Naive thymus-derived CD4-positive, alpha-beta T cell (primary cell): ENCODE measurements at regions of chr6 and their contacts with region 1.

Region 1: DNA sequence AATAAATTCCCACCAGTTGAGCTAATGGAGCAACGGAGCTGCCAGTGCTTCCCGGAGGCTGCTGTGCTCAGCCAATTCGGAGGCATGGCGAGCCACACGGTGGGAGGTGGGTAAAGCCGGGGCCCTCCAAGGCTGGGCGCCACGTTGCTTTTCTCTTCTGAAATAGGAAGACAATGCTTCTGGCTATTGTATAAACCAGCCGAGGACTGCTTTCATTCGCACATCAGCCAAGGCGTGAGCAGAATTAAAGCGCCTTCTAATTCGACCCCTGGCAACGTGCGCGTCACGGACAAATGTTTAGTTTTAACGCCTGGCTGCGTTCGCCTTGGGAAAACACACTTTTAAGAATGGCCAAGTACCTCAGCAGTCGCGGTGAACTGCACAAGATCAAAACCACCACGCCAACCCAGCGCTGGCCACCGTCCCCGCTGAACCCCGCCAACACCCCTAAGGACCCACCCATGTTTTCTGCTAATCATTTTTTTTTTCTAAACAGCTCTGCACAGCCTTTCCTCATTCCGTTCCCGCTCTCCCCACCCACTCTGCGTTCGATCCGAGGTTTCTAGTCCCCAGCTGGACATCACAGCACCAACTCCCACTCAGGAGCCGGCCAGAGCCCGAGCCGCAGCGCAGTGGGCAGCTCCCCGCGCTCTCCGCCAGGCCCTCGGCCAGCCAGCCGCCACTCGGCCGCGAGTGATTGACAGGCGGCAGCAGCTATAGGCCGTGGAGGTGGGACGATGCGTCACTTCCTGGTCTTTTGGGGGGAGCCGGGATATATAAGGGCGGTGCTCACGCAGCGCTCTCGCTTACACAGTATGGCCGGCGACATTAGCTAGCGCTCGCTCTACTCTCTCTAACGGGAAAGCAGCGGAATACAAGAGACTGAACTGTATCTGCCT is at the start of gene AMD1:
- DNase-seq: peak; percentile 87 to 97 (median 96)
- ATAC-seq: peak; percentile 85
- H3K4me3 ChIP-seq: peak within 1 kb of the TSS; percentile 99
- H3K4me3 Mint-ChIP-seq: peak within 1 kb of the TSS in 9 of 10 donors; percentile 94 to 99 (median 99)
- H3K27ac ChIP-seq: peak within 1 kb of the TSS; percentile 73
- H3K27ac Mint-ChIP-seq: peak within 1 kb of the TSS in 8 of 9 donors; percentile 96 to 100 (median 99)
- H3K4me1 ChIP-seq: peaks cover 26 to 28% of the 10 kb centered on the region in 2 donors
- H3K4me1 Mint-ChIP-seq: peaks cover 19 to 28% (median 27%) of the 10 kb centered on the region in 7 donors
- H3K27me3 ChIP-seq: no peaks in the 10 kb centered on the region
- H3K27me3 Mint-ChIP-seq: no peaks in the 10 kb centered on the region
- total RNA-seq, gene AMD1: 61.1 to 105 (median 73.8) TPM

Region 2: GRCh38 chr6:109455502-109456282 is 1418.5 kb before region 1 on chr6 and contains the start of gene MICAL1:
- CTCF ChIA-PET with region 1: no interaction called
- POLR2A ChIA-PET with region 1: no interaction called
- intact Hi-C with region 1: loop called in 1 of 2 experiments (anchors 1 kb)
- DNase-seq: peak; percentile 55 to 79 (median 72)
- ATAC-seq: peak; percentile 82
- H3K4me3 ChIP-seq: peak within 1 kb of the TSS; percentile 81
- H3K4me3 Mint-ChIP-seq: peak within 1 kb of the TSS; percentile 95 to 99 (median 97)
- H3K27ac ChIP-seq: peak within 1 kb of the TSS; percentile 94
- H3K27ac Mint-ChIP-seq: peak within 1 kb of the TSS; percentile 83 to 99 (median 97)
- H3K4me1 ChIP-seq: peaks cover 40 to 45% of the 10 kb centered on the region in 2 donors
- H3K4me1 Mint-ChIP-seq: peaks cover 29 to 68% (median 62%) of the 10 kb centered on the region in 7 donors
- H3K27me3 ChIP-seq: no peaks in the 10 kb centered on the region
- H3K27me3 Mint-ChIP-seq: no peaks in the 10 kb centered on the region
- total RNA-seq, gene MICAL1: 61.4 to 125 (median 78.7) TPM

Region 3: DNA sequence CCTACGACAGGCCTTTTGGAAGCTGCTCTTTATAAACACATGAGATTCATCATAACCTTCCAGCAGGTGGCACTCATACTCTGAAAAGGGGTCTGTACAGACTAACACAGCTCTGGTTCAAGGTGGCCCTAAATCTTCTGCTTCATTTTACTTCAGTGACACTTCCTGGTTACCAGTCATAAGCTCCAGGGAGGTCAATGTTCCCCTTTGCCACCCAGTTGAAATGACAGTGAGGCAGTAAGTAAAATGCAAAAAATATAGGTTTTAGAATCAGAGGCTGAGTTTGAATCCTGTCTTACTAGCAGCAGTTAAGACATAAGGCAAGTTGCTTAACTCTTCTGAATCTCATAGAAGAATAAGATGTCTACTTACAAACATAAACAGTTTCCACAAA is 191.8 kb before region 1 on chr6:
- CTCF ChIA-PET with region 1: interaction called, 33 read pairs
- POLR2A ChIA-PET with region 1: interaction called, 23 read pairs
- intact Hi-C with region 1: loop called (anchors 1 kb)
- DNase-seq: peak in 8 of 9 donors; percentile 42 to 84 (median 76)
- ATAC-seq: peak; percentile 99
- H3K4me3 ChIP-seq: no peak overlapping the region
- H3K4me3 Mint-ChIP-seq: no peak overlapping the region
- H3K27ac ChIP-seq: no peak overlapping the region
- H3K27ac Mint-ChIP-seq: peak overlapping the region in 4 of 9 donors; percentile 23 to 55 (median 44)
- H3K4me1 ChIP-seq: peaks cover 5 to 8% of the 10 kb centered on the region in 2 donors
- H3K4me1 Mint-ChIP-seq: peaks cover 5 to 18% (median 11%) of the 10 kb centered on the region in 7 donors
- H3K27me3 ChIP-seq: no peaks in the 10 kb centered on the region
- H3K27me3 Mint-ChIP-seq: no peaks in the 10 kb centered on the region

Region 4: DNA sequence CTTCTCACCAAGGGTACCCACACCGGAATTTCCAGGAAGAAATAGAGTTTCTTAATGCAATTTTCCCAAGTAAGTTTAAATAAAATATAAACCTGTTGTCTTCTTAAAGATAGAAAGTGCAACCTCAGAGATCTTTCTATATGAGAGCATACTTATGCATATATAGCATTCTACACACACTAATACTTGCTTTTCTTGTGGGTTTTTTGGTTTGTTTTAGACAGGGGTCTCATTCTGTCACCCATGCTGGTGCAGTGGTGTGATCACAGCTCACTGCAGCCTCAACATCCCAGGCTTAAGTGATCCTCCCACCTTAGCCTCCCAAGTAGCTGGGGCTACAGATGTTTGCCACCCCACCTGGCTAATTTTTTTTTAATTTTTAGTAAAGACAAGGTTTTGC is 16.1 kb after region 1 on chr6:
- CTCF ChIA-PET with region 1: no interaction called
- POLR2A ChIA-PET with region 1: interaction called, 32 read pairs
- intact Hi-C with region 1: loop called (anchors 2 kb)
- DNase-seq: no peak
- ATAC-seq: no peak
- H3K4me3 ChIP-seq: no peak overlapping the region
- H3K4me3 Mint-ChIP-seq: no peak overlapping the region
- H3K27ac ChIP-seq: no peak overlapping the region
- H3K27ac Mint-ChIP-seq: no peak overlapping the region
- H3K4me1 ChIP-seq: peaks cover 6 to 12% of the 10 kb centered on the region in 2 donors
- H3K4me1 Mint-ChIP-seq: peaks cover 0 to 41% (median 30%) of the 10 kb centered on the region in 7 donors
- H3K27me3 ChIP-seq: no peaks in the 10 kb centered on the region
- H3K27me3 Mint-ChIP-seq: no peaks in the 10 kb centered on the region

Region 5: GRCh38 chr6:110949679-110950285 is 75.6 kb after region 1 on chr6:
- CTCF ChIA-PET with region 1: interaction called, 4 read pairs
- POLR2A ChIA-PET with region 1: interaction called, 3 read pairs
- intact Hi-C with region 1: loop called (anchors 2 kb)
- DNase-seq: peak in 7 of 9 donors; percentile 17 to 64 (median 50)
- ATAC-seq: peak; percentile 52
- H3K4me3 ChIP-seq: no peak overlapping the region
- H3K4me3 Mint-ChIP-seq: no peak overlapping the region
- H3K27ac ChIP-seq: no peak overlapping the region
- H3K27ac Mint-ChIP-seq: no peak overlapping the region
- H3K4me1 ChIP-seq: no peaks in the 10 kb centered on the region
- H3K4me1 Mint-ChIP-seq: peaks cover 0 to 8% (median 0%) of the 10 kb centered on the region in 7 donors
- H3K27me3 ChIP-seq: no peaks in the 10 kb centered on the region
- H3K27me3 Mint-ChIP-seq: peaks cover 0 to 12% (median 6%) of the 10 kb centered on the region in 5 donors

Region 6: GRCh38 chr6:111087106-111087835 is 213.0 kb after region 1 on chr6 and contains the start of gene SLC16A10:
- CTCF ChIA-PET with region 1: no interaction called
- POLR2A ChIA-PET with region 1: interaction called, 7 read pairs
- intact Hi-C with region 1: loop called in 1 of 2 experiments (anchors 1 kb)
- DNase-seq: peak; percentile 75 to 92 (median 90)
- ATAC-seq: peak; percentile 95
- H3K4me3 ChIP-seq: peak within 1 kb of the TSS; percentile 83
- H3K4me3 Mint-ChIP-seq: peak within 1 kb of the TSS; percentile 85 to 100 (median 97)
- H3K27ac ChIP-seq: peak within 1 kb of the TSS; percentile 80
- H3K27ac Mint-ChIP-seq: peak within 1 kb of the TSS; percentile 54 to 99 (median 96)
- H3K4me1 ChIP-seq: peaks cover 10 to 17% of the 10 kb centered on the region in 2 donors
- H3K4me1 Mint-ChIP-seq: peaks cover 20 to 54% (median 48%) of the 10 kb centered on the region in 7 donors
- H3K27me3 ChIP-seq: no peaks in the 10 kb centered on the region
- H3K27me3 Mint-ChIP-seq: peaks cover 0 to 24% (median 0%) of the 10 kb centered on the region in 5 donors
- total RNA-seq, gene SLC16A10: 1.6 to 27.7 (median 16.7) TPM